Activated B cell treated with CpG ODN at 0.5 μM for 24 hours (primary cell): ENCODE measurements at regions of chrX and their contacts with region 1.

Region 1: DNA sequence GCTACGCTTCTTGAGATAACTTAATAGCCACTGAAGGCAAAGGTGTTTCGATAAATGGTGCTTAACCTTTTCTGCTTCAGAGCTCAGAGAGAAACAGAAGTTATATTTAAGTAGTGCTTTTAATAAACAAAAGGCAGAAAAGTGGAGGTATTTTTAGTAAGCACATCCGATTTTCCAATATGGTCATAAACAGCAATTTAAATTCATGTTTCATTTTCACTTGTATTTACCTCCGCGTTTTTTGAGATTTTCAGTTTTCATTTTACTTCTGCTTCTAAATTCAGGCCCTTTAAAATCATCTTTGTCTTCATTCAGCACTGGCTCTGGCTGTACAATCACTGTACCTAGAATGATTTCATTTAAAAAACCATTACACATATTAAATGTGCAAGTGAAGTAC is 92.4 kb downstream of the ATRX start:
- DNase-seq: no peak
- ATAC-seq: no peak
- H3K4me3 Mint-ChIP-seq: peak overlapping the region; percentile 4
- H3K27ac Mint-ChIP-seq: peak overlapping the region; percentile 50
- H3K4me1 Mint-ChIP-seq: peaks cover 11% of the 10 kb centered on the region
- H3K27me3 Mint-ChIP-seq: no peaks in the 10 kb centered on the region
- CTCF ChIP-seq: no peak

Region 2: GRCh38 chrX:77638397-77638796 is 55.2 kb before region 1 on chrX:
- CTCF ChIA-PET with region 1: no interaction called
- POLR2A ChIA-PET with region 1: no interaction called
- intact Hi-C with region 1: no loop called
- DNase-seq: no peak
- ATAC-seq: no peak
- H3K4me3 Mint-ChIP-seq: no peak overlapping the region
- H3K27ac Mint-ChIP-seq: no peak overlapping the region
- H3K4me1 Mint-ChIP-seq: peaks cover 4% of the 10 kb centered on the region
- H3K27me3 Mint-ChIP-seq: no peaks in the 10 kb centered on the region
- CTCF ChIP-seq: no peak

Region 3: DNA sequence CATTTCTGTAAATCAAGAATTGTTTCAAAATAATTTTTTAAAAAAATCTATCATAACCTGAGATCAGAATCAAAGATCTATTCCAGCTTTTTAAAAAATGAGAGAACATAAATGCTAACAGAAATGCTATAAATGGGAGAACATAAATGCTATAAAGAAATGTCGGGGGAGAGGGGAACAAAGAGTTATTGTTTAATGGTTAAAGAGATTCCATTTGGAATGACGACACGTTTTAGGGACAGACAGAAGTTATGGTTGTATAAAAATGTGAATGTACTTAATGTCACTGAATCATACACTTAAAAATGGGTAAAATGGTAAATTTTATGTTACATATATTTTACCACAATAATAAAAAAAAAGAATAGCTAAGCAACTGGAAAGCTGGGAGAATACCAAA is 34.7 kb before region 1 on chrX:
- CTCF ChIA-PET with region 1: no interaction called
- POLR2A ChIA-PET with region 1: interaction called, 4 read pairs
- intact Hi-C with region 1: loop called (anchors 5 kb)
- DNase-seq: no peak
- ATAC-seq: no peak
- H3K4me3 Mint-ChIP-seq: no peak overlapping the region
- H3K27ac Mint-ChIP-seq: no peak overlapping the region
- H3K4me1 Mint-ChIP-seq: no peaks in the 10 kb centered on the region
- H3K27me3 Mint-ChIP-seq: no peaks in the 10 kb centered on the region
- CTCF ChIP-seq: no peak